Tibial artery (tissue), 4 donors: ENCODE measurements at regions of chr19 and their contacts with region 1.

Region 1: GRCh38 chr19:3365836-3366752 is at the start of gene NFIC:
- DNase-seq: peak; percentile 84 to 93
- H3K4me3 ChIP-seq: peak within 1 kb of the TSS; percentile 98
- H3K27ac ChIP-seq: peak within 1 kb of the TSS; percentile 99 to 100
- H3K4me1 ChIP-seq: peaks cover 3 to 76% (median 56%) of the 10 kb centered on the region in 4 donors
- H3K27me3 ChIP-seq: no peaks in the 10 kb centered on the region
- CTCF ChIP-seq: no peak

Region 2: GRCh38 chr19:3073159-3073563 is 292.9 kb before region 1 on chr19:
- intact Hi-C with region 1: no loop called
- DNase-seq: no peak
- H3K4me3 ChIP-seq: no peak overlapping the region
- H3K27ac ChIP-seq: no peak overlapping the region
- H3K4me1 ChIP-seq: peaks cover 0 to 9% (median 7%) of the 10 kb centered on the region in 4 donors
- H3K27me3 ChIP-seq: no peaks in the 10 kb centered on the region
- CTCF ChIP-seq: no peak

Region 3: GRCh38 chr19:3336680-3337523 is 29.2 kb before region 1 on chr19:
- intact Hi-C with region 1: loop called (anchors 2 kb)
- DNase-seq: peak; percentile 90 to 99
- H3K4me3 ChIP-seq: peak overlapping the region in 1 of 2 donors; percentile 16
- H3K27ac ChIP-seq: peak overlapping the region; percentile 88 to 96
- H3K4me1 ChIP-seq: peaks cover 4 to 65% (median 51%) of the 10 kb centered on the region in 4 donors
- H3K27me3 ChIP-seq: no peaks in the 10 kb centered on the region
- CTCF ChIP-seq: no peak

Region 4: GRCh38 chr19:3403489-3404323 is 37.6 kb after region 1 on chr19:
- intact Hi-C with region 1: loop called (anchors 5 kb)
- DNase-seq: peak; percentile 92 to 98
- H3K4me3 ChIP-seq: peak overlapping the region; percentile 52 to 63
- H3K27ac ChIP-seq: peak overlapping the region; percentile 98 to 100
- H3K4me1 ChIP-seq: peaks cover 0 to 91% (median 58%) of the 10 kb centered on the region in 4 donors
- H3K27me3 ChIP-seq: no peaks in the 10 kb centered on the region
- CTCF ChIP-seq: no peak